Activated CD4-positive, alpha-beta T cell treated with anti-CD3 and anti-CD28 coated beads, Interleukin-2, amount 10 ng/mL, durations not matched to agents 24 days and 14 days (primary cell): ENCODE measurements at regions of chr1 and their contacts with region 1.

Region 1: GRCh38 chr1:230109895-230110667 is 43.0 kb downstream of the GALNT2 start:
- DNase-seq: peak; percentile 89
- H3K4me3 Mint-ChIP-seq: peak overlapping the region; percentile 37
- H3K27ac Mint-ChIP-seq: peak overlapping the region; percentile 93
- H3K4me1 Mint-ChIP-seq: peaks cover 76% of the 10 kb centered on the region
- H3K27me3 Mint-ChIP-seq: no peaks in the 10 kb centered on the region

Region 2: DNA sequence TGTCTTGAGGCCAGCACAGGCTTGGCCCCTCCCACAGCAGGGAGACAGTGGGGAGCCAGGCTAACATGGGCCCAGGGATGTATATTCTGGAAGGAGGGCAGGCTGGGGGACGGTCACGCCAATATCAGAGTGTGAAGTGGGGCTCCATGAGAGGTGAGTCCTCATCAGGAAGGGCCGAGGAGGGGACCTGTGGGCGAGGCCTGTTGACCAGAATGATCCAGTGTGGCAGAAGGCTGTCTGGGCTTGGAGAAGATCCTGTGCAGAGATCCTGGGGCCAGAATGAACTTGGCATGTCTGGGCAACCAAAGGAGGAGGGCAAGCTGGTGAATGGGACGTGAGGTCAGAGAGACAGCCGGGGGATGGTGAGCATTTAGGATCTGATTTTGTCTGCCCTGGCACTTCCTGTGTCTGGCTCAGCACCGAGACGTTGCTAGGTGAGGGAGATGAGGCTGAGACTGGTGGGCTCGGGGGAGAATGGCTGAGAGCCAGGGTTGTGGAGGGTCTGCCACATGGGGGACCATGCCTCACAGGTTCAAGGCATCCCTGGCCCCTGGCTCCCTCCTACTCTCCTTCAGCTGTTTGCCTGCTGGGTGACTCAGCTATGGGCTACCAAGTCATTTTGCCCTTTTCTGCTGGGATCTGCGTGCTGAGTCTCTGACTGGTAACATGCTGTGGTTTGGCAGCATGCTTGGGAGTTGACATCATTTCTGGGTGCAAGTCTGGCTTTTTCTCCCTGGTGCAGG is 25.8 kb before region 1 on chr1:
- intact Hi-C with region 1: loop called (anchors 1 kb)
- DNase-seq: peak; percentile 76
- H3K4me3 Mint-ChIP-seq: peak overlapping the region; percentile 36
- H3K27ac Mint-ChIP-seq: peak overlapping the region; percentile 76
- H3K4me1 Mint-ChIP-seq: peaks cover 63% of the 10 kb centered on the region
- H3K27me3 Mint-ChIP-seq: no peaks in the 10 kb centered on the region

Region 3: GRCh38 chr1:230120926-230121381 is 10.9 kb after region 1 on chr1:
- intact Hi-C with region 1: loop called (anchors 1 kb)
- DNase-seq: no peak
- H3K4me3 Mint-ChIP-seq: no peak overlapping the region
- H3K27ac Mint-ChIP-seq: no peak overlapping the region
- H3K4me1 Mint-ChIP-seq: peaks cover 64% of the 10 kb centered on the region
- H3K27me3 Mint-ChIP-seq: no peaks in the 10 kb centered on the region

Region 4: DNA sequence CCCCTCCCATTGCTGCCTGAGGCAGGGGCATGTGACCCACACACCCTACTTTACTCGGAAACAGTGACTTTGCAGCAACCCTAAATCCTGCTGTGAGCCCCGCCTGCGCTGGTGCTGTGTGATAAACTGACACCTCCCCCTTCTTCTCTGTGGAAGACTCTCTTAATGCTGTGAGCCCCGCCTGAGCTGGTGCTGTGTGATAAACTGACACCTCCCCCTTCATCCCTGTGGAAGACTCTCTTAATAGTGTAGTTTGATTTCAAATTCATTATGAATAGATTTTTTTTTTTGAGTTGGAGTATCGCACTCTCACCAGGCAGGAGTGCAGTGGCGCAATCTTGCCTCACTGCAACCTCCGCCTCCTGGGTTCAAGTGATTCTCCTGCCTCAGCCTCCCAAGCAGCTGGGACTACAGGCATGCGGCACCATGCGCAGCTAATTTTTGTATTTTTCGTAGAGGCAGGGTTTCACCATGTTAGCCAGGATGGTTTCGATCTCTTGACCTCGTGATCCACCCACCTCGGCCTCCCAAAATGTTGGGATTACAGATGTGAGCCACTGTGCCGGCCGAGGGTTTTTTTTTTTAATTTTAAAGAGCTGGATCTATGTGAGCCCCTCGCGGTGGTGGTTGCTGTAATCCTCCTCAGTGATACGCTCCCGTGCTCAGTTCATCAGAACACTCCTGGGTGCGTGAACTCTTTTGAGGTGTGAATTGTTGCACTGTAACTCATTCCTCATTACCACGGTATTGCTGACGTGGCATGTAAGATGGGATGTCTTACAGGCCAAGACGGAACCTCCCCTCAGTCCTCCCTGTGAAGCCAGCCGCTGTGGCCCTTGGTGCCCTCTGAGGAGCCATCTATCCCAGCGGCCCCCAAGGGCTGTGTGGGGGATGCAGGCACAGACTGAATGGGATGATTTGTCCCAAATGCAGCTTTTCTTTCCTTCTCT is 17.3 kb after region 1 on chr1:
- intact Hi-C with region 1: loop called (anchors 1 kb)
- DNase-seq: peak; percentile 88
- H3K4me3 Mint-ChIP-seq: peak overlapping the region; percentile 76
- H3K27ac Mint-ChIP-seq: peak overlapping the region; percentile 81
- H3K4me1 Mint-ChIP-seq: peaks cover 70% of the 10 kb centered on the region
- H3K27me3 Mint-ChIP-seq: no peaks in the 10 kb centered on the region

Region 5: GRCh38 chr1:230167419-230167852 is 57.4 kb after region 1 on chr1:
- intact Hi-C with region 1: loop called (anchors 5 kb)
- DNase-seq: peak; percentile 78
- H3K4me3 Mint-ChIP-seq: no peak overlapping the region
- H3K27ac Mint-ChIP-seq: peak overlapping the region; percentile 1
- H3K4me1 Mint-ChIP-seq: peaks cover 36% of the 10 kb centered on the region
- H3K27me3 Mint-ChIP-seq: no peaks in the 10 kb centered on the region

Region 6: DNA sequence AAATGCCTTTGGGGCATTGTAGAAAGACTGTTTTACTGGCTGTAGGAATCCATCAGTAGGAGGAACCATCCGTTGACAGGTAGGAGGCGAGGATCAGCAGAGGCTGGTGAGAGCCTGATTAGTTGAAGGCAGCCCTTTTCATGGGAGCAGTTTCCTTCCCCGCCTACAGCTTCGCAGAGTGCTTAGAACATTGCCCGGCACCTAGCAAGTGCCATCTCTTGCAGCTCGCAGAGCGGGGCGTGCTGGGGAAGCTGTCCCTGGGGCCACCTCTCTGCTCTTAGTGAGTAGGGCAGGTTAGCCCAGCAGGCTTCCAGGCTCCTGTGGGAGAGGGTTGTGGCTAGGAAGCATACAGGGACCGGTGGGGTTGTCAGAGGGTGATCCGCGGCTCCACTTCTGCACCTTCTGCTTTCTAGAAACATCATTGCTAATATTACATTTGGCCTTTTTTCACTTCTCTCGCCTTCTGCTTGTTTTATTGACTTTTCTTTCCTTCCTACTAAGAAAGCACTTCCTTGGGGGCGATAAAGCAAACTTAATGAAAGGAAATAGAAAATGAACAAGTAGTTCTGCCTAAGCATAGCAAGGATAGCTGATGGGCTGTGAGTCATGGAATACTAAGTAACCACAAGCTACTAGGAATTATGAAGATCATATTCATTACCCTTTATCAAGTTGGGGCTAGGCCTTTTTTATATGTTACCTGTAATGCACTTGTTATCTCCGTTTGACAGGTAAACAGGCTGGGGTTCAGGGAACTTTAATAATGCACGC is 133.7 kb after region 1 on chr1:
- intact Hi-C with region 1: loop called (anchors 1 kb)
- DNase-seq: no peak
- H3K4me3 Mint-ChIP-seq: no peak overlapping the region
- H3K27ac Mint-ChIP-seq: peak overlapping the region; percentile 68
- H3K4me1 Mint-ChIP-seq: peaks cover 40% of the 10 kb centered on the region
- H3K27me3 Mint-ChIP-seq: no peaks in the 10 kb centered on the region